Testis (tissue), 5 donors: ENCODE measurements at regions of chr1 and their contacts with region 1.

Region 1: GRCh38 chr1:17653728-17654351 is 101.3 kb upstream of the ACTL8 start:
- DNase-seq: peak; percentile 64
- H3K4me3 ChIP-seq: no peak overlapping the region
- H3K27ac ChIP-seq: no peak overlapping the region
- H3K4me1 ChIP-seq: no peaks in the 10 kb centered on the region
- H3K27me3 ChIP-seq: no peaks in the 10 kb centered on the region
- CTCF ChIP-seq: peak; percentile 28 to 54 (median 43)
- POLR2A ChIP-seq: no peak

Region 2: GRCh38 chr1:18575620-18576019 is 921.8 kb after region 1 on chr1:
- intact Hi-C with region 1: loop called (anchors 5 kb)
- DNase-seq: peak; percentile 81
- H3K4me3 ChIP-seq: no peak overlapping the region
- H3K27ac ChIP-seq: no peak overlapping the region
- H3K4me1 ChIP-seq: no peaks in the 10 kb centered on the region
- H3K27me3 ChIP-seq: no peaks in the 10 kb centered on the region
- CTCF ChIP-seq: peak; percentile 41 to 79 (median 70)
- POLR2A ChIP-seq: no peak